Mammary epithelial cell (primary cell): ENCODE measurements at regions of chr20 and their contacts with region 1.

Region 1: GRCh38 chr20:9392892-9393857 is 121.2 kb upstream of the LAMP5 start:
- DNase-seq: peak; percentile 40
- H3K4me3 ChIP-seq: no peak overlapping the region
- H3K27ac ChIP-seq: no peak overlapping the region
- H3K4me1 ChIP-seq: no peaks in the 10 kb centered on the region
- H3K27me3 ChIP-seq: no peaks in the 10 kb centered on the region
- CTCF ChIP-seq: peak; percentile 72 to 92

Region 2: GRCh38 chr20:8756410-8756809 is 636.8 kb before region 1 on chr20:
- CTCF ChIA-PET with region 1: no interaction called
- dilution Hi-C with region 1: no loop called
- in situ Hi-C with region 1: no loop called
- intact Hi-C with region 1: loop called (anchors 10 kb)
- DNase-seq: peak; percentile 23
- H3K4me3 ChIP-seq: no peak overlapping the region
- H3K27ac ChIP-seq: no peak overlapping the region
- H3K4me1 ChIP-seq: peaks cover 7% of the 10 kb centered on the region
- H3K27me3 ChIP-seq: no peaks in the 10 kb centered on the region
- CTCF ChIP-seq: no peak

Region 3: GRCh38 chr20:8853805-8854338 is 539.3 kb before region 1 on chr20:
- CTCF ChIA-PET with region 1: no interaction called
- dilution Hi-C with region 1: no loop called
- in situ Hi-C with region 1: no loop called
- intact Hi-C with region 1: loop called (anchors 1 kb)
- DNase-seq: peak; percentile 60
- H3K4me3 ChIP-seq: no peak overlapping the region
- H3K27ac ChIP-seq: no peak overlapping the region
- H3K4me1 ChIP-seq: no peaks in the 10 kb centered on the region
- H3K27me3 ChIP-seq: peaks cover 2% of the 10 kb centered on the region
- CTCF ChIP-seq: peak; percentile 92 to 96

Region 4: GRCh38 chr20:9103955-9104354 is 289.2 kb before region 1 on chr20:
- CTCF ChIA-PET with region 1: no interaction called
- dilution Hi-C with region 1: no loop called
- in situ Hi-C with region 1: no loop called
- intact Hi-C with region 1: no loop called
- DNase-seq: peak; percentile 62
- H3K4me3 ChIP-seq: no peak overlapping the region
- H3K27ac ChIP-seq: no peak overlapping the region
- H3K4me1 ChIP-seq: no peaks in the 10 kb centered on the region
- H3K27me3 ChIP-seq: no peaks in the 10 kb centered on the region
- CTCF ChIP-seq: peak in 1 of 2 donors; percentile 11

Region 5: GRCh38 chr20:9474835-9475415 is 81.8 kb after region 1 on chr20:
- CTCF ChIA-PET with region 1: no interaction called
- dilution Hi-C with region 1: loop called (anchors 5 kb)
- in situ Hi-C with region 1: no loop called
- intact Hi-C with region 1: no loop called
- DNase-seq: no peak
- H3K4me3 ChIP-seq: no peak overlapping the region
- H3K27ac ChIP-seq: no peak overlapping the region
- H3K4me1 ChIP-seq: no peaks in the 10 kb centered on the region
- H3K27me3 ChIP-seq: no peaks in the 10 kb centered on the region
- CTCF ChIP-seq: no peak